ENCODE measurements at regions of chr9 and their contacts with region 1.

Region 1: GRCh38 chr9:91012933-91013841 is 211.6 kb downstream of the SYK start:
- DNase-seq: peak; percentile 29
- H3K4me3 Mint-ChIP-seq: no peak overlapping the region
- H3K27ac Mint-ChIP-seq: no peak overlapping the region
- H3K4me1 Mint-ChIP-seq: peaks cover 9% of the 10 kb centered on the region
- H3K27me3 Mint-ChIP-seq: peaks cover 21% of the 10 kb centered on the region

Region 2: GRCh38 chr9:90985631-90986030 is 27.6 kb before region 1 on chr9:
- CTCF ChIA-PET with region 1: no interaction called
- POLR2A ChIA-PET with region 1: no interaction called
- intact Hi-C with region 1: loop called (anchors 1 kb)
- DNase-seq: no peak
- H3K4me3 Mint-ChIP-seq: no peak overlapping the region
- H3K27ac Mint-ChIP-seq: no peak overlapping the region
- H3K4me1 Mint-ChIP-seq: peaks cover 2% of the 10 kb centered on the region
- H3K27me3 Mint-ChIP-seq: peaks cover 11% of the 10 kb centered on the region

Region 3: DNA sequence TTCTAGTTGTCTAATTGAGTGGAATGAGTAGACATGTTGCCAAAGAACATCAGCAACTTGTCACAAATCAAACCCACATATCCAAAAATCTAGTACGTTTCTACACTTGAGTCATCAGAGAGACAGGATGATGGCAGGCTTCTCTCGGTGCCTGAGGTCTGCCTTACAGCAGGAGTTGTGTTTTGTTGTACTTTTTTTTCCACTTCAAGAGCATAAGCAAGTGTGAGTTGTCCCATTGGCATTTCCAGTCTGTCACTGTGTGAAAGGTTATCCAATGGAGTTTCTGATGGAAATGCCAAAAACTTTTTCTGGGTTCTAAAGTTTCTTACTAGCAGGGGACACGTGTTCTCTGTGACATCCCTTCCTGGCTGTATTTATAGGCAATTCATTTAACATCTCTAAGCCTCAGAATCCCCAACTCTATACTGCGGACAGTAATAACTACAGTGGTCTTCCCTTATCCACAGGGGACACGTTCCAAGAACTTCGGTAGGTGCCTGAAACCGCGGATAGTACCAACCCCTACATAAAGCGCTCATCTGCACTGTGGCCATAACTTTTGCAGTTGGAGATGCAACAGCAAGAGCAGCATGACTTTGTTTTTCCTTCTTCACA is 34.9 kb after region 1 on chr9:
- CTCF ChIA-PET with region 1: no interaction called
- POLR2A ChIA-PET with region 1: no interaction called
- intact Hi-C with region 1: no loop called
- DNase-seq: peak; percentile 73
- H3K4me3 Mint-ChIP-seq: no peak overlapping the region
- H3K27ac Mint-ChIP-seq: peak overlapping the region; percentile 83
- H3K4me1 Mint-ChIP-seq: peaks cover 58% of the 10 kb centered on the region
- H3K27me3 Mint-ChIP-seq: peaks cover 40% of the 10 kb centered on the region